MCF 10A (cell line): ENCODE measurements at regions of chr6 and their contacts with region 1.

Region 1: GRCh38 chr6:116405138-116405537 is 34.4 kb downstream of the DSE start:
- DNase-seq: no peak
- H3K4me3 Mint-ChIP-seq: no peak overlapping the region
- H3K27ac Mint-ChIP-seq: no peak overlapping the region
- H3K4me1 Mint-ChIP-seq: peaks cover 21% of the 10 kb centered on the region
- H3K27me3 Mint-ChIP-seq: no peaks in the 10 kb centered on the region
- CTCF ChIP-seq: no peak

Region 2: GRCh38 chr6:116323863-116324262 is 81.3 kb before region 1 on chr6:
- CTCF ChIA-PET with region 1: no interaction called
- POLR2A ChIA-PET with region 1: no interaction called
- intact Hi-C with region 1: no loop called
- DNase-seq: no peak
- H3K4me3 Mint-ChIP-seq: no peak overlapping the region
- H3K27ac Mint-ChIP-seq: no peak overlapping the region
- H3K4me1 Mint-ChIP-seq: peaks cover 6% of the 10 kb centered on the region
- H3K27me3 Mint-ChIP-seq: no peaks in the 10 kb centered on the region
- CTCF ChIP-seq: no peak

Region 3: GRCh38 chr6:116424001-116424400 is 18.9 kb after region 1 on chr6:
- CTCF ChIA-PET with region 1: interaction called, 5 read pairs
- POLR2A ChIA-PET with region 1: interaction called, 14 read pairs
- intact Hi-C with region 1: no loop called
- DNase-seq: peak; percentile 45
- H3K4me3 Mint-ChIP-seq: no peak overlapping the region
- H3K27ac Mint-ChIP-seq: peak overlapping the region; percentile 9
- H3K4me1 Mint-ChIP-seq: peaks cover 8% of the 10 kb centered on the region
- H3K27me3 Mint-ChIP-seq: no peaks in the 10 kb centered on the region
- CTCF ChIP-seq: no peak

Region 4: DNA sequence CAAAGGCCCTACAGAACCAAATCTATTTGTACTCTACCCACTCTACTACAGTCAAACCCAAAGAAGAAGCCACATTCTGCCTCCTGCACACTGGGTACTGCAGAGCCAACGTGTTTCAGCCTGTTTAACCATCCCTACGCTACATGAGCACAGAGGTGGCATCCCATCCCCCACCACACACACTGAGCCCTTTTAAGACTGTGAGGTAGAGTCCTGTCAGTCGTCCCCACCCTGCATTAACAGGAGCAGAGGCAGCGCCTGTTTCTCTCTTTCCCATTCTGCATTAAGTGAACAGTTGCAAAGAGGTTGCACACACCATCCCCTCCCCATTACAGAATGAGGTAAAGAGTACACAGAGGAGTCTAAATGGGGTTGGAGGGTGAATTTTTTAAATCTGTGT is 205.9 kb after region 1 on chr6:
- CTCF ChIA-PET with region 1: no interaction called
- POLR2A ChIA-PET with region 1: no interaction called
- intact Hi-C with region 1: no loop called
- DNase-seq: no peak
- H3K4me3 Mint-ChIP-seq: no peak overlapping the region
- H3K27ac Mint-ChIP-seq: no peak overlapping the region
- H3K4me1 Mint-ChIP-seq: no peaks in the 10 kb centered on the region
- H3K27me3 Mint-ChIP-seq: peaks cover 11% of the 10 kb centered on the region
- CTCF ChIP-seq: no peak